Naive thymus-derived CD8-positive, alpha-beta T cell (primary cell): ENCODE measurements at regions of chr7 and their contacts with region 1.

Region 1: DNA sequence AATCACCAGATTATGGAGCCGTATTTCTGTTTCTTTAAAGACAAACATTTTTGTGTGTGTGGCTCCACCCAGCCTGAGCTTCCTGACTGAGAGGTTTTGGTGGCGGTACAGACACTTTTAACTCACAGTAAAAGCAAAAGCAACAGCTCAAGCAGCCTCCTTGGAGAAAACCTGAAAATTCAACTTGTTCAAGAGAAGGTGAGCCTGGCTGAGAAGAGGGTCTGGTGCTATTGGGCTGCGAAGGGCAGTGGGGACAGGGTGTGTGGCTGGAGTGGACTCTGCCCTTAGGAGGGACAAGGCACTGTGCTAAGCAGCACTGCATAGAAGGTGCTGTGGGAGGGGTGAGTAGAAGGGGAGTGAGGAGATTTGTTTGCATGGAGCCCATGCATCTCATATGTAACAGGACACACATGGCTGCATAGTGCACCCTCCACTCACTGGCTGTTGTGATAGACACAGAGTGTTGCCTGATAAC is at the start of gene GIMAP7:
- DNase-seq: peak; percentile 29 to 87 (median 71)
- ATAC-seq: peak; percentile 72 to 85
- H3K4me3 Mint-ChIP-seq: peak within 1 kb of the TSS; percentile 96 to 100 (median 99)
- H3K27ac Mint-ChIP-seq: peak within 1 kb of the TSS; percentile 94 to 99 (median 98)
- H3K4me1 Mint-ChIP-seq: peaks cover 25 to 50% (median 48%) of the 10 kb centered on the region in 4 donors
- H3K27me3 Mint-ChIP-seq: no peaks in the 10 kb centered on the region
- polyA plus RNA-seq, gene GIMAP7: 451 to 821 (median 658) TPM

Region 2: DNA sequence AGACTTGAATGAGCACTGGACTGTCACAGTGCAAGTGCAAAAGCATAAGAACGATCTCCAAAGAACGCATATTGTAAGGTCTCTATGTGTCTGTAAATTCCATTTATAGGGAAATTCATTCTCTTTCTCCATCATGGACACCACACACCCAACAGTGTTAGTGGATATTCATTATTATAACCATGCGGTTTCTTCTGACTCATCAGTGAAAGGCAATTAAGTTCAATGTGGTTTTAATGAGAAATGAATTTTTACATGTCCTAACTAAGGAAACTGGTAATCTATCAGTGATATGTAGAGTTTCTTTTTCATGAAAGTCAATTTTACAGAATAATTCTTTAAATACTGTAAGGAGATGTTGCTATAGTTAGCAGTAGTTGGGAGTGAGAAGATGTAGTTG is 38.5 kb before region 1 on chr7:
- POLR2A ChIA-PET with region 1: interaction called, 504 read pairs
- DNase-seq: no peak
- ATAC-seq: no peak
- H3K4me3 Mint-ChIP-seq: peak overlapping the region in 9 of 10 donors; percentile 1 to 80 (median 34)
- H3K27ac Mint-ChIP-seq: peak overlapping the region; percentile 89 to 100 (median 100)
- H3K4me1 Mint-ChIP-seq: peaks cover 44 to 93% (median 91%) of the 10 kb centered on the region in 4 donors
- H3K27me3 Mint-ChIP-seq: no peaks in the 10 kb centered on the region

Region 3: DNA sequence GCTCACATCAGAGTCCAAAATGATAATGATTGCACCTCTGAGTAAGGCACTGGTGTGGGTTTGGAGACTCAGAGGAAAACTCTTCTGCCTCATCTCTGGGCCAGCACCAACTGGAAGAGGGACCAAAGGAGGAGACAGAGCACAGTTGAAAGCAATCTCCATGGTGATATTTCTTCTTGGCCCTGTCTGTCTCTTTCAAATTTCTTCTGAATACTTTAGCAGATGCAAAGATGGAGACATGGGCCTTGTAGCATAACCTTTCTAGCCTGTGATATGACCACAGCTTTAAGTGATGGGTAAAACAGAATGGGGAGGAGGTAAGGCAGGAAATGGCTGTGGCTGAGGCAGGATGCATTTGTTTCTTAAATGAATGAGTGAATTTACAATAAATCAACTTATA is 12.3 kb before region 1 on chr7:
- POLR2A ChIA-PET with region 1: interaction called, 110 read pairs
- DNase-seq: peak in 5 of 10 donors; percentile 13 to 81 (median 58)
- ATAC-seq: peak; percentile 84 to 98
- H3K4me3 Mint-ChIP-seq: peak overlapping the region; percentile 13 to 83 (median 70)
- H3K27ac Mint-ChIP-seq: peak overlapping the region; percentile 83 to 97 (median 92)
- H3K4me1 Mint-ChIP-seq: peaks cover 49 to 87% (median 85%) of the 10 kb centered on the region in 4 donors
- H3K27me3 Mint-ChIP-seq: no peaks in the 10 kb centered on the region

Region 4: GRCh38 chr7:150668472-150668911 is 153.7 kb after region 1 on chr7:
- POLR2A ChIA-PET with region 1: interaction called, 22 read pairs
- DNase-seq: peak in 9 of 10 donors; percentile 41 to 86 (median 71)
- ATAC-seq: peak; percentile 79 to 92
- H3K4me3 Mint-ChIP-seq: peak overlapping the region; percentile 60 to 85 (median 78)
- H3K27ac Mint-ChIP-seq: peak overlapping the region; percentile 94 to 100 (median 98)
- H3K4me1 Mint-ChIP-seq: peaks cover 34 to 93% (median 89%) of the 10 kb centered on the region in 4 donors
- H3K27me3 Mint-ChIP-seq: no peaks in the 10 kb centered on the region

Region 5: GRCh38 chr7:150695654-150696053 is 180.9 kb after region 1 on chr7:
- POLR2A ChIA-PET with region 1: no interaction called
- DNase-seq: no peak
- ATAC-seq: no peak
- H3K4me3 Mint-ChIP-seq: no peak overlapping the region
- H3K27ac Mint-ChIP-seq: peak overlapping the region in 2 of 10 donors; percentile 27 to 58
- H3K4me1 Mint-ChIP-seq: peaks cover 1 to 28% (median 15%) of the 10 kb centered on the region in 4 donors
- H3K27me3 Mint-ChIP-seq: no peaks in the 10 kb centered on the region

Region 6: GRCh38 chr7:150716368-150716767 is 201.6 kb after region 1 on chr7 and contains the start of gene GIMAP1:
- POLR2A ChIA-PET with region 1: interaction called, 162 read pairs
- DNase-seq: peak; percentile 39 to 85 (median 68)
- ATAC-seq: peak; percentile 81 to 91
- H3K4me3 Mint-ChIP-seq: peak within 1 kb of the TSS; percentile 92 to 100 (median 97)
- H3K27ac Mint-ChIP-seq: peak within 1 kb of the TSS; percentile 89 to 99 (median 98)
- H3K4me1 Mint-ChIP-seq: peaks cover 40 to 69% (median 66%) of the 10 kb centered on the region in 4 donors
- H3K27me3 Mint-ChIP-seq: no peaks in the 10 kb centered on the region
- polyA plus RNA-seq, gene GIMAP1: 48.0 to 87.4 (median 67.1) TPM

Region 7: DNA sequence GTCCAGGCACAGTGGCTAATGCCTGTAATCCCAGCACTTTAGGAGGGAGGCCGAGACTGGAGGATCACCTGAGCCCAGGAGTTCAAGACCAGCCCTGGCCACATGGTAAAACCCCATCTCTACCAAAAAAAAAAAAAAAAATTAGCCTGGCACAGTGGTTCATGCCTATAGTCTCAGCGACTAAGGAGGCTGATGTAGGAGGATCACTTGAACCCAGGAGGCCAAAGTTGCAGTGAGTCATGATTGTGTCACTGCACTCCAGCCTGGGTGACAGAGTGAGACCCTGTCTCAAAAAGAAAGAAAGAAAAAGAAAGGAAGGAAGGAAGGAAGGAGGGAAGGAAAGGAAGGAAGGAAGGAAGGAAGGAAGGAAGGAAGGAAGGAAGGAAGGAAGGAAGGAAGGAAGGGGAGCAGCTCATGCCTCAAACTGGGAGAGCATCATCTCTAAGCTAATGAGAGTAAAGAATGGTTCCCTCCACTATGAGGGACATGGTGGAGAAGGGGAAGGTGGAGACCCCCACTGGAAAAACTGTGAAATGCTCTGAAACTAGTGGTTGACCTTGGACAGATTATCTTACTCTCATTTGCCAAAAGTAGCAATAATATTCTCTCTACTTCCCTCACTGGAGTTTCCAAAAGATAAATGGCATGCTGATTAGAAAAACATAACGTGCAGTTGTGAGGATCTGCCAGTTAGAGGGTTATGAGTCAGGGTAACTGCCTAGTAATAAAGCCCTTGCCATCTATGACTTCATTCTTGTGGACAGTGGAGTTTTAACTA is 239.2 kb after region 1 on chr7:
- POLR2A ChIA-PET with region 1: interaction called, 44 read pairs
- DNase-seq: peak in 1 of 10 donors; percentile 60
- ATAC-seq: peak in 1 of 2 donors; percentile 10
- H3K4me3 Mint-ChIP-seq: peak overlapping the region in 9 of 10 donors; percentile 36 to 78 (median 63)
- H3K27ac Mint-ChIP-seq: peak overlapping the region; percentile 66 to 97 (median 94)
- H3K4me1 Mint-ChIP-seq: peaks cover 35 to 77% (median 71%) of the 10 kb centered on the region in 4 donors
- H3K27me3 Mint-ChIP-seq: peaks cover 0 to 2% (median 0%) of the 10 kb centered on the region in 5 donors